ENCODE measurements at regions of chr3 and their contacts with region 1.

Region 1: GRCh38 chr3:45210308-45211041 is 15.6 kb downstream of the TMEM158 start:
- DNase-seq: peak; percentile 51 to 88 (median 81)
- ATAC-seq: peak; percentile 93
- H3K4me3 ChIP-seq: no peak overlapping the region
- H3K4me3 Mint-ChIP-seq: no peak overlapping the region
- H3K27ac ChIP-seq: no peak overlapping the region
- H3K27ac Mint-ChIP-seq: no peak overlapping the region
- H3K4me1 ChIP-seq: peaks cover 8% of the 10 kb centered on the region
- H3K4me1 Mint-ChIP-seq: peaks cover 9% of the 10 kb centered on the region
- H3K27me3 ChIP-seq: peaks cover 0 to 6% of the 10 kb centered on the region in 2 experiments
- H3K27me3 Mint-ChIP-seq: peaks cover 28% of the 10 kb centered on the region
- CTCF ChIP-seq: peak; percentile 56

Region 2: DNA sequence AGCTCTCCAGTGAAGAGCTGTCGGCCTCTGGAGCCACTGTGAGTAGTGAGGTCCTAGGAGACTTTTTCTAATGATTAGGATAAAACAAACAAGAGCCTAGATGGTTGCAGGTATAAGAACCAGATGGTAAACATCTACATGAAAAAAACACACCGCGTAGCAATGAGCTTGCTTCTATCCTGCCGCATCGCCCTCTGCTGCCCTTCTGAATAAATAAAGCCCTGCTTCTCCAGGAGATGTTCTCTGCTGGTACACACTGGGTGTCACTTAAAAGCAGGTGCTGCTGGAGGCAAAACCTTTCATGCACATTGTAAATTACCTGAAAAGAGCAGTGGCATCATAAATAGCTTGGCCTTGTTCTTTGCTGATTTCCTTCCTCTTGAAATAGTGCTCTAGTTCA is 1133.2 kb before region 1 on chr3:
- CTCF ChIA-PET with region 1: no interaction called
- POLR2A ChIA-PET with region 1: no interaction called
- intact Hi-C with region 1: no loop called
- DNase-seq: no peak
- ATAC-seq: no peak
- H3K4me3 ChIP-seq: no peak overlapping the region
- H3K4me3 Mint-ChIP-seq: no peak overlapping the region
- H3K27ac ChIP-seq: no peak overlapping the region
- H3K27ac Mint-ChIP-seq: no peak overlapping the region
- H3K4me1 ChIP-seq: no peaks in the 10 kb centered on the region
- H3K4me1 Mint-ChIP-seq: no peaks in the 10 kb centered on the region
- H3K27me3 ChIP-seq: no peaks in the 10 kb centered on the region
- H3K27me3 Mint-ChIP-seq: peaks cover under 1% of the 10 kb centered on the region
- CTCF ChIP-seq: no peak

Region 3: GRCh38 chr3:44529927-44530326 is 680.5 kb before region 1 on chr3:
- CTCF ChIA-PET with region 1: no interaction called
- POLR2A ChIA-PET with region 1: no interaction called
- intact Hi-C with region 1: loop called in 1 of 2 experiments (anchors 5 kb)
- DNase-seq: peak in 2 of 9 experiments; percentile 12 to 26
- ATAC-seq: no peak
- H3K4me3 ChIP-seq: no peak overlapping the region
- H3K4me3 Mint-ChIP-seq: no peak overlapping the region
- H3K27ac ChIP-seq: no peak overlapping the region
- H3K27ac Mint-ChIP-seq: no peak overlapping the region
- H3K4me1 ChIP-seq: no peaks in the 10 kb centered on the region
- H3K4me1 Mint-ChIP-seq: no peaks in the 10 kb centered on the region
- H3K27me3 ChIP-seq: no peaks in the 10 kb centered on the region
- H3K27me3 Mint-ChIP-seq: peaks cover 16% of the 10 kb centered on the region
- CTCF ChIP-seq: no peak

Region 4: DNA sequence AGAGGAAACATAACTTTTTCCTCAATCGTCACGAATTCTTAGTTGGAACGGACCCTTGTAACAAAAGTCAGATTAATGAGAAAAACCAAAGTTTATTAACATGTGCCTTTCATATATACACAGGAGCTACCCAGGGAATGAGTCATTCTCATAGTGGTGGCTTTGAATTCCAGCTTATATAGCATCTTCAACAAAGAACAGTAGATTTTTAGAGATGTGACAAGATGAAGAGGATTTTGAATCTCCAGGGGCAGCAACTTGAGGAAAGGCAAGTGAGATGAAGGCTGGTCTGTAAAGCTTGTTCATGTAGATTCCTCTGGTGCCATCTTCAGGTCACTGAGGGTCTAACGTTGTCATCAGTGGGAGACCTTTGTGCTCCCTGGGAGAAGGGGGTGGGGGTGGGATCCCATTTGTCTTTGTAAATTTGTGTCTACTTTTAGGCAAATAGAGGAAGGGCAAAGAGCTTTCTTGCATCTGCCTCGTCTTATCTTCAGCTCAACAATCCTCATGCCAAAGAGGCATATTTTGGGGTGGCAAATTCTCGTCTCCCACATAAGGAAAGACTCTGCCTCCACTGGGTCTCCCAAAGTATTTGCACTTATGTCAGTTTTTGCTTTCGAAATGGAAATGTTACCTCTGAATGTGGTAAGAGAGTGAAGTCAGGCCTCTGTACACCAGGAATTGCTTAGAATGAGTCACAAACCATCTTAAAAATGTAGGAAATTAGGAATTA is 154.9 kb before region 1 on chr3:
- CTCF ChIA-PET with region 1: interaction called, 13 read pairs
- POLR2A ChIA-PET with region 1: interaction called, 3 read pairs
- intact Hi-C with region 1: no loop called
- DNase-seq: peak in 2 of 9 experiments; percentile 23 to 39
- ATAC-seq: no peak
- H3K4me3 ChIP-seq: no peak overlapping the region
- H3K4me3 Mint-ChIP-seq: no peak overlapping the region
- H3K27ac ChIP-seq: no peak overlapping the region
- H3K27ac Mint-ChIP-seq: no peak overlapping the region
- H3K4me1 ChIP-seq: no peaks in the 10 kb centered on the region
- H3K4me1 Mint-ChIP-seq: no peaks in the 10 kb centered on the region
- H3K27me3 ChIP-seq: peaks cover 0 to 2% of the 10 kb centered on the region in 2 experiments
- H3K27me3 Mint-ChIP-seq: peaks cover 10% of the 10 kb centered on the region
- CTCF ChIP-seq: no peak

Region 5: DNA sequence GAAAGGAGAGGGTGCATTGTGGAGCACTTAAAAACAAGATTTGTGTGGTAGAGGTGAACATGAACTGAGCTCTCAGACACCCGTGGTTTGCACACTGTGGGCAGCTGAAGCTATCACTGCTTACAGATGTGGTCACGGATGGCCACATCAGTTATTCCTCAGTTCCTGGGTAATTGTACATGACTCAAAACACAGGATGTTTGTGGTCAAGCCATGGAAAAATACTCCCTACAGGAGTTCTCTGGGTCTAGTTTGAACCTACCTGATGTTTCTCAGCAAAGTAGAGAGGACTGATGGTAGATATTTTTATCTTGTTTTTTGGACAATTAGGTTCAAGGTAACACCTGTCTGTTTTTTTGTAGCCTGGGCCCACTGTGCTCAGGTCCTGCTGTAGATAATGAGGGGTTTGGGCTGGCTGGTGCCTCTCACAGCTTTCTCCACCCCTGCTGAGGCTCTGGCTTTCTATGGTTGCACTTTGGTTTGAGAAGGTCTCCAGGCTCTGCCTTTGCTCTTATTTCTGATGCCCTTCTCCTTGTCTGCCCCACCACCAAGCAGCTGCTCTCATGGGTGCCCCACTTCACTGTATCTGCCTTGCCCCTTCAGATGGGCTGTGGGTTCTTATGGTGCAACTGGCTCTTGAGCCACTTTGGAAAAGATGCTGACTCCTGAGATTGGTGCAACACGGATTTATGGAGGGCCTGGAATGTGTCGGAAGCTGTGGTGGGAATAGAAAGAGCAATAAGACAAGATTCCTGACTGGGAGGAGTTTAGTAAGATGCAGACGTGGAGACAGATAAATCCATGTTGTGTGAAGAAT is 104.4 kb before region 1 on chr3:
- CTCF ChIA-PET with region 1: interaction called, 7 read pairs
- POLR2A ChIA-PET with region 1: no interaction called
- intact Hi-C with region 1: loop called in 1 of 2 experiments (anchors 5 kb)
- DNase-seq: peak; percentile 18 to 77 (median 64)
- ATAC-seq: peak; percentile 74
- H3K4me3 ChIP-seq: no peak overlapping the region
- H3K4me3 Mint-ChIP-seq: peak overlapping the region; percentile 2
- H3K27ac ChIP-seq: no peak overlapping the region
- H3K27ac Mint-ChIP-seq: no peak overlapping the region
- H3K4me1 ChIP-seq: peaks cover 60% of the 10 kb centered on the region
- H3K4me1 Mint-ChIP-seq: peaks cover 66% of the 10 kb centered on the region
- H3K27me3 ChIP-seq: peaks cover 0 to 16% of the 10 kb centered on the region in 2 experiments
- H3K27me3 Mint-ChIP-seq: peaks cover 15% of the 10 kb centered on the region
- CTCF ChIP-seq: no peak

Region 6: GRCh38 chr3:45194791-45195190 is 15.7 kb before region 1 on chr3:
- CTCF ChIA-PET with region 1: interaction called, 29 read pairs
- POLR2A ChIA-PET with region 1: no interaction called
- intact Hi-C with region 1: no loop called
- DNase-seq: no peak
- ATAC-seq: no peak
- H3K4me3 ChIP-seq: no peak overlapping the region
- H3K4me3 Mint-ChIP-seq: no peak overlapping the region
- H3K27ac ChIP-seq: no peak overlapping the region
- H3K27ac Mint-ChIP-seq: no peak overlapping the region
- H3K4me1 ChIP-seq: no peaks in the 10 kb centered on the region
- H3K4me1 Mint-ChIP-seq: no peaks in the 10 kb centered on the region
- H3K27me3 ChIP-seq: no peaks in the 10 kb centered on the region
- H3K27me3 Mint-ChIP-seq: peaks cover 13% of the 10 kb centered on the region
- CTCF ChIP-seq: no peak

Region 7: DNA sequence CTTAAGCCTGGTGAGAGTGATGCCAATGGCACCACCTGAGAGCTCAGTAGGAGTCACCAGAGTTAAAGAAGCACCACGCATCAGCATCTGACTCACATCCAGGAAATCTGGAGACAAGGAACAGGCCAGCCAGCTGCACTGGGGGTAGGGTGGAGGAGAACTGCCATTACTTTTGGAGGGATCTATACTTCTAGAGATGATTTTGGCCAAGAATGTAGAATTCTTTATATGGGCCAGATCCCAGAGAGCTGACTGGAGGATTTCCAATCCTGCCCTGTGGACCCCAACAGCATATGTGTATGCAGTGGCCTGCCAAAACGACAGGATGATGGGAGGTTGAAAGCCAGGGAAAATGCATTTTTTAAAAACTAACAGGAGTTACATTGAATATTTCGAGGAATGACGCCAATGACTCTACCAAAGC is 1061.6 kb after region 1 on chr3:
- CTCF ChIA-PET with region 1: no interaction called
- POLR2A ChIA-PET with region 1: no interaction called
- intact Hi-C with region 1: no loop called
- DNase-seq: no peak
- ATAC-seq: no peak
- H3K4me3 ChIP-seq: no peak overlapping the region
- H3K4me3 Mint-ChIP-seq: no peak overlapping the region
- H3K27ac ChIP-seq: no peak overlapping the region
- H3K27ac Mint-ChIP-seq: no peak overlapping the region
- H3K4me1 ChIP-seq: peaks cover 4% of the 10 kb centered on the region
- H3K4me1 Mint-ChIP-seq: peaks cover 18% of the 10 kb centered on the region
- H3K27me3 ChIP-seq: no peaks in the 10 kb centered on the region
- H3K27me3 Mint-ChIP-seq: peaks cover 5% of the 10 kb centered on the region
- CTCF ChIP-seq: no peak